ENCODE measurements at regions of chr3 and their contacts with region 1.

Region 1: GRCh38 chr3:46065294-46065721 is 38.0 kb upstream of the XCR1 start:
- DNase-seq: peak; percentile 62 to 97 (median 75)
- ATAC-seq: peak; percentile 84
- H3K4me3 ChIP-seq: no peak overlapping the region
- H3K4me3 Mint-ChIP-seq: peak overlapping the region; percentile 70
- H3K27ac ChIP-seq: peak overlapping the region; percentile 17 to 37
- H3K27ac Mint-ChIP-seq: peak overlapping the region; percentile 87
- H3K4me1 ChIP-seq: peaks cover 69% of the 10 kb centered on the region
- H3K4me1 Mint-ChIP-seq: peaks cover 69% of the 10 kb centered on the region
- H3K27me3 ChIP-seq: no peaks in the 10 kb centered on the region
- H3K27me3 Mint-ChIP-seq: peaks cover under 1% of the 10 kb centered on the region
- CTCF ChIP-seq: no peak

Region 2: DNA sequence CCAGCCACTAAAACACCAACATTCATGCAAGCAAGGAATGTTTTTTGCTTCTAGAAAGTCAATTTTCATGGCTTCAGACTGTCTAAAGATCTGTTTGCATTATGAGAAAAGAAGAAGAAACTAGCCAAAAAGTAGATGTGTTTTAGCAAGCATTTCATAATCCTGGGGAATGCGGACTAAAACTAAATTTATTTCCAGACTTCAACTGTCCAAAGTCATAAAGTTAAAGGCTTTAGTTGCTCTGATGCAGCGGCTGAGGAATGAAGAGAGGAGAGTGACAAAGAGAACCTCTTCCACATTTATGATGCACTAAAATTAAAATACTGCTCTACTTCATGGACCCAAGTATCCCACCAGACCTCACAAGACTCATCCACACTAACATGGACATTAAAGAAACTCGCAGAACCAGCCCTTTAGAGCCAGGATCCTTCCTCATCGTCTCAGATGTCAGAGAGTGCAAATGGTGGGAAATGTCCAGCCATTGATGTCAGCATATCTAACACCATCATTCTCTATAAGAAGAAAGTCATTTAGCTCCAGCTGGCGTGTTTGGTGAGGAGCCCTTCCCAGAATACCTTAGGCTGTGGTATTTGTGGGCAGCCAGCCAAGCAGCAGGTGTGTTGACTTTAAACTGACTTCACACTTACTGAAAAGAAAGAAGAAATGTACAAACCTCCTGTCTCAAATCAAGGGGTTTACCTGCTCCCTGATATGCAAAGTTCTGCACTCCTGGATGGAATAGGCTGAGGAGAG is 87.1 kb before region 1 on chr3:
- CTCF ChIA-PET with region 1: no interaction called
- POLR2A ChIA-PET with region 1: interaction called, 17 read pairs
- intact Hi-C with region 1: no loop called
- DNase-seq: peak in 13 of 14 experiments; percentile 35 to 74 (median 46)
- ATAC-seq: peak; percentile 17
- H3K4me3 ChIP-seq: no peak overlapping the region
- H3K4me3 Mint-ChIP-seq: peak overlapping the region; percentile 81
- H3K27ac ChIP-seq: peak overlapping the region in 1 of 2 donors; percentile 8
- H3K27ac Mint-ChIP-seq: peak overlapping the region; percentile 96
- H3K4me1 ChIP-seq: peaks cover 77% of the 10 kb centered on the region
- H3K4me1 Mint-ChIP-seq: peaks cover 68% of the 10 kb centered on the region
- H3K27me3 ChIP-seq: no peaks in the 10 kb centered on the region
- H3K27me3 Mint-ChIP-seq: no peaks in the 10 kb centered on the region
- CTCF ChIP-seq: no peak

Region 3: DNA sequence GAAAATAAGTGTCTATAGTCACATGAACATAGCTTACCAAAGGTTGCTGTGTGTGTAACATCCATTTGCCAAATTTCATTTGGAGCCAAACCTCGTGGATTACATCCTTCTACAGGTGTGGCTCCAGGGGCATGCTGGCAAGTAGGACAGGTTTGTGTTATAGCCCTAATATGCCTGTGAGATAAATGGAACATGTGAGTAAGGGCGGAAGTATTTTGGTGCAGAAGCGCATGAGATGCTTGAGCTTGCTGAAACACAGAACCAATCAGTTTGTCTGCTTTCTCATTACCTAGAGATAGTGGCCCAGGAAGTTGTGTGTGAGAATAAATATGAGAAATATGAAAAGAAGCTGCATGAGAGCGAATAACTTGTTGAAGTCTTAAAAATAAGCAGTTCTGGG is 16.2 kb before region 1 on chr3:
- CTCF ChIA-PET with region 1: no interaction called
- POLR2A ChIA-PET with region 1: interaction called, 11 read pairs
- intact Hi-C with region 1: no loop called
- DNase-seq: peak in 1 of 14 experiments; percentile 19
- ATAC-seq: no peak
- H3K4me3 ChIP-seq: no peak overlapping the region
- H3K4me3 Mint-ChIP-seq: no peak overlapping the region
- H3K27ac ChIP-seq: no peak overlapping the region
- H3K27ac Mint-ChIP-seq: no peak overlapping the region
- H3K4me1 ChIP-seq: peaks cover 10% of the 10 kb centered on the region
- H3K4me1 Mint-ChIP-seq: peaks cover 46% of the 10 kb centered on the region
- H3K27me3 ChIP-seq: no peaks in the 10 kb centered on the region
- H3K27me3 Mint-ChIP-seq: no peaks in the 10 kb centered on the region
- CTCF ChIP-seq: no peak

Region 4: GRCh38 chr3:46183330-46183729 is 118.0 kb after region 1 on chr3:
- CTCF ChIA-PET with region 1: no interaction called
- POLR2A ChIA-PET with region 1: no interaction called
- intact Hi-C with region 1: no loop called
- DNase-seq: peak in 2 of 14 experiments; percentile 23 to 42
- ATAC-seq: no peak
- H3K4me3 ChIP-seq: no peak overlapping the region
- H3K4me3 Mint-ChIP-seq: no peak overlapping the region
- H3K27ac ChIP-seq: no peak overlapping the region
- H3K27ac Mint-ChIP-seq: no peak overlapping the region
- H3K4me1 ChIP-seq: no peaks in the 10 kb centered on the region
- H3K4me1 Mint-ChIP-seq: no peaks in the 10 kb centered on the region
- H3K27me3 ChIP-seq: no peaks in the 10 kb centered on the region
- H3K27me3 Mint-ChIP-seq: peaks cover 16% of the 10 kb centered on the region
- CTCF ChIP-seq: no peak

Measured in CD4-positive, alpha-beta T cell (primary cell).